ENCODE measurements at regions of chr9 and their contacts with region 1.

Region 1: GRCh38 chr9:122940603-122941559 is at the start of gene RABGAP1:
- DNase-seq: peak; percentile 97 to 99 (median 99)
- H3K4me3 ChIP-seq: peak within 1 kb of the TSS; percentile 55 to 97 (median 89)
- H3K27ac ChIP-seq: peak within 1 kb of the TSS; percentile 39 to 95 (median 86)
- H3K27me3 ChIP-seq: no peaks in the 10 kb centered on the region
- CTCF ChIP-seq: peak in 9 of 56 donors; percentile 7 to 21 (median 14)
- total RNA-seq, gene RABGAP1: 110 to 188 (median 152) TPM

Region 2: DNA sequence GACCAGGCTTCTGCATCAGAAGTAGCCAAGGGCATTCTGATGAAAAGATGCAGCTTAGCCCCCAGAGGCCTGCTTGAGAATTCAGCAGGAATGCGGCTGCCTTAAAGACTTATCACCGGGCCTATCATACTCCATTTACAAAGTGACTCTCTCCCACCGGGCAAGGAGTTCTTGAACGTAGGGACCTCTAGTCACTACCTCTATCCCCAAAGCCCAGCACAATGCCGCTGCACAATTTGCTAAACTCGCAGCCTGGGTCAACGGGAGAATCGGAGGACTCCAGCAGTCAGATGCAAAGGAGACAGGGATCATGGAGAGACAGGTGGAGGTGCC is 113.2 kb before region 1 on chr9:
- intact Hi-C with region 1: loop called in 1 of 2 experiments (anchors 10 kb)
- DNase-seq: no peak
- H3K4me3 ChIP-seq: peak overlapping the region; percentile 47 to 100 (median 96)
- H3K27ac ChIP-seq: peak overlapping the region in 55 of 59 donors; percentile 62 to 98 (median 92)
- H3K27me3 ChIP-seq: no peaks in the 10 kb centered on the region
- CTCF ChIP-seq: no peak

Region 3: GRCh38 chr9:122875523-122875922 is 65.4 kb before region 1 on chr9:
- intact Hi-C with region 1: no loop called
- DNase-seq: no peak
- H3K4me3 ChIP-seq: no peak overlapping the region
- H3K27ac ChIP-seq: no peak overlapping the region
- H3K27me3 ChIP-seq: no peaks in the 10 kb centered on the region
- CTCF ChIP-seq: no peak

Region 4: GRCh38 chr9:122904823-122905710 is 35.8 kb before region 1 on chr9 and contains the start of gene RC3H2:
- intact Hi-C with region 1: loop called in 1 of 2 experiments (anchors 2 kb)
- DNase-seq: peak; percentile 99 to 100 (median 100)
- H3K4me3 ChIP-seq: peak within 1 kb of the TSS; percentile 57 to 99 (median 90)
- H3K27ac ChIP-seq: peak within 1 kb of the TSS; percentile 85 to 99 (median 96)
- H3K27me3 ChIP-seq: no peaks in the 10 kb centered on the region
- CTCF ChIP-seq: peak in 17 of 56 donors; percentile 4 to 48 (median 23)
- total RNA-seq, gene RC3H2: 46.8 to 94.9 (median 69.0) TPM

Region 5: GRCh38 chr9:122991370-122991830 is 50.5 kb after region 1 on chr9:
- intact Hi-C with region 1: loop called in 1 of 2 experiments (anchors 10 kb)
- DNase-seq: peak in 5 of 10 donors; percentile 27 to 66 (median 36)
- H3K4me3 ChIP-seq: no peak overlapping the region
- H3K27ac ChIP-seq: peak overlapping the region in 18 of 59 donors; percentile 0 to 60 (median 16)
- H3K27me3 ChIP-seq: no peaks in the 10 kb centered on the region
- CTCF ChIP-seq: peak; percentile 51 to 88 (median 78)

Measured in dorsolateral prefrontal cortex (tissue), 120 donors.